PC-9 (cell line): ENCODE measurements at regions of chr6 and their contacts with region 1.

Region 1: GRCh38 chr6:129416337-129416990 is 293.5 kb downstream of the ARHGAP18 start:
- DNase-seq: no peak
- H3K4me3 ChIP-seq: no peak overlapping the region
- H3K27ac ChIP-seq: no peak overlapping the region
- H3K4me1 ChIP-seq: no peaks in the 10 kb centered on the region
- H3K27me3 ChIP-seq: no peaks in the 10 kb centered on the region
- CTCF ChIP-seq: no peak

Region 2: DNA sequence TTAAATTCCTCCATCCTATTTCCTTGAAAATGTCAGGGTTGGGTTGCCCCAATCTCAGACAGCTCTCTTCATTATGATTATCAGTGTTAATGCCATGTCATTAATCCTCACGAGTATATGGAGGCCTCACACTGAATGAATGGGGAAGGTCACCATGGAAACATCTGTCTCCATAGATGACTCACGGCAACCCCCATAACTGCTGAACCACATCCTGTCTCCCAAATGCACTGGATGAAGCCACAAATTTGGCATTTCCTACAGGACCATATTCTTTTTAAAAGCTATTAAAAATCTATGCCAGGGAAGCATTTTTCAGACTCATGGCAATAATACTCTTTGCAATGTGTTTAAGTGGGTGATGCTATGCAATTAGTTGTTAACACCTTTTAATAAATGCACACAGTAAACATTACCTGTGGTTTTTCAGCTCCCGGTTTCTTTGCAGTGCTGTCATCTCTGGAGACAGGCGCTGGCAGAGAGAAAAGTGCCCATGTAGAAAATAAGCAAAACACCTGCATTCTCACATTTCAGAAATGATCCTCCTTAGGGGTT is 816.0 kb before region 1 on chr6:
- CTCF ChIA-PET with region 1: no interaction called
- POLR2A ChIA-PET with region 1: interaction called, 11 read pairs
- intact Hi-C with region 1: no loop called
- DNase-seq: peak; percentile 47 to 78
- H3K4me3 ChIP-seq: no peak overlapping the region
- H3K27ac ChIP-seq: peak overlapping the region; percentile 81
- H3K4me1 ChIP-seq: peaks cover 52% of the 10 kb centered on the region
- H3K27me3 ChIP-seq: no peaks in the 10 kb centered on the region
- CTCF ChIP-seq: no peak